ENCODE measurements at regions of chr10 and their contacts with region 1.

Region 1: GRCh38 chr10:5385224-5385623 is 19.4 kb downstream of the TUBAL3 start:
- DNase-seq: no peak
- H3K4me3 ChIP-seq: no peak overlapping the region
- H3K27ac ChIP-seq: no peak overlapping the region
- H3K4me1 ChIP-seq: no peaks in the 10 kb centered on the region
- H3K27me3 ChIP-seq: no peaks in the 10 kb centered on the region
- CTCF ChIP-seq: no peak

Region 2: DNA sequence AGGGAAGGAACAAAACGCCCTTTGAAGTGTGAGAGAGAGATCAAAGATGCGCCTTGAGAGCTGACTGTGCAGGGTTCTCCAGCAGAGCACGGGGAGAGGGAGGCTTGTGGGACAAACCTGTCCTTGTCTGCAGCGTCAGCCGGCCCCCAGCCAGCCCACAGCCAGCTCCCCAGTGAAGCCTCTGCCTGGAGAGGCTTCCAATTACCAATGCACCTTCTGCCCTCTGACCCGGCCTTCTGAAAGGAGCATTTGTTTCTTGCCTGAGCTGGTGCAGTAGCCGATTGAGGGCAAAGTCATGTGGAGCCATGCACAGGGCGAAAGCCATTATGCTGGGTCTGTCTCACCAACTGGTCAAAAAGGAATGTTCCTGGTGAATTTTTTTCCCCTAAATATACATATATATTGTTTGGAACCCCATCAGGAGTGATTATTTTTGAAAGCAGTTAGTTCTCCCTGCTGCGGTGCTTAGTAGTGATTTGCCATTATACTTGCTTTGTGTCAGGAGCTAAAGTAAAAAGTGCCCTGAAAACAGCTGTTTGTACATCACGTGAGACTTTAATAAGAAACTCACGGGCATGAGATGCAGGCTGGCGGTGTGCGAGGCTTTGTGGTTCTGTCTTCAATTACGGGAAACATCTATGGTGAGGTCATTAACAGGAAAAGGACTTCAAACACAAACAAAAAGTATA is 1868.8 kb before region 1 on chr10:
- CTCF ChIA-PET with region 1: no interaction called
- POLR2A ChIA-PET with region 1: no interaction called
- intact Hi-C with region 1: no loop called
- DNase-seq: no peak
- H3K4me3 ChIP-seq: no peak overlapping the region
- H3K27ac ChIP-seq: no peak overlapping the region
- H3K4me1 ChIP-seq: no peaks in the 10 kb centered on the region
- H3K27me3 ChIP-seq: no peaks in the 10 kb centered on the region
- CTCF ChIP-seq: no peak

Region 3: DNA sequence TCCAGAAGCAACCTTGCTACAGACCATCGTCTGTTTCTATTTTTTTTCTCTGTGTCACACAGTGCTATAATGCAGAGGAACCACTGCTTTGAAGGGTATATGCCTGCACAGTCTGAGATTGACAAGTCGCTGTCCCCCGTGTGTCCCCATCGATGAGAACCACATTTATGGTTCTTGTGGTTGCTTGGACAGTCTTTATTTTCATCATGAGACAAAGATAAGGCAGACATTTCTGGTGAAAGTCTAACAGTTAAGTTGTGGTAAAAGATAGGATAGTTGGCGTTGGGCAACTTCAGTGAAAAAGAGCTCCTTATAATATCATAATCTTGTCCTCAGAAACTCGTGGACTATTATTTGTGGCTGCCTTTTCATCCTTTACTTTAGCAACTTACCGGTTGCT is 565.5 kb before region 1 on chr10:
- CTCF ChIA-PET with region 1: no interaction called
- POLR2A ChIA-PET with region 1: no interaction called
- intact Hi-C with region 1: loop called (anchors 5 kb)
- DNase-seq: no peak
- H3K4me3 ChIP-seq: no peak overlapping the region
- H3K27ac ChIP-seq: no peak overlapping the region
- H3K4me1 ChIP-seq: no peaks in the 10 kb centered on the region; the same call in 1 of the 2 replicates
- H3K27me3 ChIP-seq: no peaks in the 10 kb centered on the region
- CTCF ChIP-seq: no peak

Region 4: GRCh38 chr10:5317547-5318107 is 67.6 kb before region 1 on chr10:
- CTCF ChIA-PET with region 1: no interaction called
- POLR2A ChIA-PET with region 1: no interaction called
- intact Hi-C with region 1: no loop called
- DNase-seq: peak; percentile 70 to 74
- H3K4me3 ChIP-seq: no peak overlapping the region
- H3K27ac ChIP-seq: peak overlapping the region; percentile 61
- H3K4me1 ChIP-seq: peaks cover 11% of the 10 kb centered on the region
- H3K27me3 ChIP-seq: no peaks in the 10 kb centered on the region
- CTCF ChIP-seq: no peak

Region 5: GRCh38 chr10:5434017-5434753 is 49.0 kb after region 1 on chr10:
- CTCF ChIA-PET with region 1: no interaction called
- POLR2A ChIA-PET with region 1: no interaction called
- intact Hi-C with region 1: loop called (anchors 5 kb)
- DNase-seq: peak in 1 of 2 experiments; percentile 14
- H3K4me3 ChIP-seq: no peak overlapping the region
- H3K27ac ChIP-seq: peak overlapping the region; percentile 43
- H3K4me1 ChIP-seq: peaks cover 10% of the 10 kb centered on the region; the same call in 1 of the 2 replicates
- H3K27me3 ChIP-seq: no peaks in the 10 kb centered on the region
- CTCF ChIP-seq: peak; percentile 76

Measured in PC-9 (cell line).